Cardiac septum (tissue), 1 donor: ENCODE measurements at regions of chr14 and their contacts with region 1.

Region 1: DNA sequence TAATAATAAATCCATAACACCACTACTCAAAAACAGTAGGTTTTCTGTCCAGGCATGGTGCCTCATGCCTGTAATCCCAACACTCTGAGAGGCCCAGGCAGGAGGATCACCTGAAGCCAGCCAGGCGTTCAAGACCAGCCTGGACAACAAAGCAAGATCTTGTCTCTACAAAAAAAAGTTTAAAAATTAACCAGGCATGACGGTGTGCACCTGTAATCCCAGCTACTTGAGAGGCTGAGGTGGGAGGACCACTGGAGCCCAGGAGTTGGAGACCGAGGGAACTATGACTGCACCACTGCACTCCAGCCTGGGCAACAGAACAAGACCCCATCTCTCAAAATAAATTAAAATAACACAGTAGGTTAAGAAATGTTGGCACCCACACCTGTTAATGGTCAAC is 44.5 kb upstream of the AP4S1 start:
- DNase-seq: no peak

Region 2: DNA sequence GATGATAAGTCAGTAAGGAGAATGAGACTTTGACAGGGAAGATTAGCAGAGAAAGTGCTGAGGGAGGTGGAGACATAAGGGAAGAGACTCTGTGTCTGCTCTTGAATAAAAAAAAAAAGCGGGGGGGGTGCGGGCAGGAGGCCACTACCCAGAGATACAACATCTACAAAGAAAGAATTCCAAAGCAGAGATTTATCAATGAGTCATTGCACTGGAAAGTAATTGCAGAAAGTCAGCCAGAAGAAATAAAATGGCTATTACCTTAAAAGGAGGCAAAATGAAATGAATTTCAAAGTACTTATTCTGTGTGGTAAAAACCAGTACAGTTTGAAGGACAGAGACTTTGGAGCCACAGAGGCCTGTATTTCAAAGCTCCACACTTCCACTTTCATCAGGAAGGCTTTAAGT is 786.2 kb before region 1 on chr14:
- intact Hi-C with region 1: no loop called
- DNase-seq: no peak

Region 3: DNA sequence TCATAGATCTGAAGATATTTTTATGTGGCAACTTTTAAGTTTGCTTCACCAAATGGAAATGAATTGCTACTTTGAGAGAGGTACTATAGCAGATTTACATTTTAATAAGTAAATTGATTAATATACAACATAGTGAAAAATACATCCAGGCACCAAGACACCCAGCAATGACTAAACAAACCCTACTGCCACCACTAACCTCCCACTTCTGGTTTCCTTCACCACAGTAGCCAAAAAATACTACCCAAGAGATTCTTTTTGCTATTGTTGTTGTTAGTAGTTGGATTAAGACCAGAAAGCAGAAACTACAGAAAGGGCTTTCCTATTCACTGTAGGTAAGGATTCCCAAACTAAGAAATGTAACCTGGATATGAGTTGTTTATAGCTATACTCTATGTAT is 52.5 kb before region 1 on chr14:
- intact Hi-C with region 1: no loop called
- DNase-seq: no peak

Region 4: GRCh38 chr14:30994681-30995620 is 14.0 kb after region 1 on chr14:
- intact Hi-C with region 1: no loop called
- DNase-seq: no peak

Region 5: DNA sequence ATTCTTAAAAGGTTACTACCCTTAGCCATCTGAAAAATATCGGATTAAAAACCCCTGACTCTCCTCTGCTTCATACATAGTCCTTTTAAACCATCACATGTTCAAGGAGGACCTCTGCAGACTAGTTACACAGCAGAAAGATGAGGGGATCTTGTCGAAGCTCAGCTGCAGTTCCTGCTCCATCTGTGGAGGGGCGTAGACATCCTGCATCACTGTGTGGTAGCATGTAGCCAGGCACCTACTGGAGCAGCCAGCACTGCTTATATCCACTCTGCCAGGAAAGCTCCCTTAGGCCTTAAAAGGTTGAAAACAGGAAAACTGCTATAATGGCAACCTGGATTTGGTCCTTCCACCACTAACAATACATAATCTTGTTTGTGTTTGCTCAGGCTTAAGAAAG is 102.8 kb after region 1 on chr14:
- intact Hi-C with region 1: loop called (anchors 2 kb)
- DNase-seq: no peak

Region 6: DNA sequence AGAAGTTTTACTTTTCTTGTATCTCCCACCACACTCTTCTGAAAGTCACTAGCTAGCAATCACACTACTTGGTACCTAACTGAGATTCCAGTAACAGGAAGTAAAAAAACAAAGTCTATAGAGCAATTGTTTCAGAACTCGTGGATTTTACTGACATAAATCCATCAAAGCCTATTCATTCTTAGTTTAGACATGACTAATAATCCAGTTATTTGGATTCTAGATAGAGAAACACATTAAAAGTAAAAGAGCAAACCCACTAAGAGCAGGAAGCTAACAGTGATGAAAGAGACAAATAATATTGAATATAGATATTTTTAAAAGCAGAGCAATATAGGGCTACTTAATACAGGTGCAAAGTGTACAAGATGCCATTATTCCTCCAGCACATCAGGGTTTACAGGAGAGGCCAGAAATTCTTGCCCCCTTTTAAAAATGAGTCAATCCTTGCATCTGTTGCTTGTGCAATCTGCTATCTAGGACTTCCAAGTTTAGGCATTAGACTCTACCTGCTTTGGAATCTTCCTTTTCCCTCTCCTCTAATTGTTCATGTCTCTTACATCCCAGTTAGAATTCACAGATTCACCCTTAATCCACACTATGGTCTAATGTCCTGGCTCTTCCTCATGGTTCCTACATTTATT is 433.3 kb after region 1 on chr14:
- intact Hi-C with region 1: no loop called
- DNase-seq: no peak